Caco-2 (cell line): ENCODE measurements at regions of chr7 and their contacts with region 1.

Region 1: GRCh38 chr7:20219446-20220292 is 2.5 kb upstream of the MACC1 start:
- DNase-seq: peak; percentile 94 to 98
- H3K4me3 ChIP-seq: no peak overlapping the region
- H3K4me3 Mint-ChIP-seq: peak overlapping the region; percentile 78
- H3K27ac Mint-ChIP-seq: peak overlapping the region; percentile 95
- H3K4me1 ChIP-seq: peaks cover 52% of the 10 kb centered on the region
- H3K4me1 Mint-ChIP-seq: peaks cover 48% of the 10 kb centered on the region
- H3K27me3 ChIP-seq: no peaks in the 10 kb centered on the region
- H3K27me3 Mint-ChIP-seq: no peaks in the 10 kb centered on the region
- CTCF ChIP-seq: no peak

Region 2: GRCh38 chr7:18458830-18459229 is 1760.8 kb before region 1 on chr7:
- CTCF ChIA-PET with region 1: no interaction called
- POLR2A ChIA-PET with region 1: no interaction called
- intact Hi-C with region 1: no loop called
- DNase-seq: no peak
- H3K4me3 ChIP-seq: no peak overlapping the region
- H3K4me3 Mint-ChIP-seq: no peak overlapping the region
- H3K27ac Mint-ChIP-seq: no peak overlapping the region
- H3K4me1 ChIP-seq: no peaks in the 10 kb centered on the region
- H3K4me1 Mint-ChIP-seq: no peaks in the 10 kb centered on the region
- H3K27me3 ChIP-seq: no peaks in the 10 kb centered on the region
- H3K27me3 Mint-ChIP-seq: no peaks in the 10 kb centered on the region
- CTCF ChIP-seq: no peak

Region 3: DNA sequence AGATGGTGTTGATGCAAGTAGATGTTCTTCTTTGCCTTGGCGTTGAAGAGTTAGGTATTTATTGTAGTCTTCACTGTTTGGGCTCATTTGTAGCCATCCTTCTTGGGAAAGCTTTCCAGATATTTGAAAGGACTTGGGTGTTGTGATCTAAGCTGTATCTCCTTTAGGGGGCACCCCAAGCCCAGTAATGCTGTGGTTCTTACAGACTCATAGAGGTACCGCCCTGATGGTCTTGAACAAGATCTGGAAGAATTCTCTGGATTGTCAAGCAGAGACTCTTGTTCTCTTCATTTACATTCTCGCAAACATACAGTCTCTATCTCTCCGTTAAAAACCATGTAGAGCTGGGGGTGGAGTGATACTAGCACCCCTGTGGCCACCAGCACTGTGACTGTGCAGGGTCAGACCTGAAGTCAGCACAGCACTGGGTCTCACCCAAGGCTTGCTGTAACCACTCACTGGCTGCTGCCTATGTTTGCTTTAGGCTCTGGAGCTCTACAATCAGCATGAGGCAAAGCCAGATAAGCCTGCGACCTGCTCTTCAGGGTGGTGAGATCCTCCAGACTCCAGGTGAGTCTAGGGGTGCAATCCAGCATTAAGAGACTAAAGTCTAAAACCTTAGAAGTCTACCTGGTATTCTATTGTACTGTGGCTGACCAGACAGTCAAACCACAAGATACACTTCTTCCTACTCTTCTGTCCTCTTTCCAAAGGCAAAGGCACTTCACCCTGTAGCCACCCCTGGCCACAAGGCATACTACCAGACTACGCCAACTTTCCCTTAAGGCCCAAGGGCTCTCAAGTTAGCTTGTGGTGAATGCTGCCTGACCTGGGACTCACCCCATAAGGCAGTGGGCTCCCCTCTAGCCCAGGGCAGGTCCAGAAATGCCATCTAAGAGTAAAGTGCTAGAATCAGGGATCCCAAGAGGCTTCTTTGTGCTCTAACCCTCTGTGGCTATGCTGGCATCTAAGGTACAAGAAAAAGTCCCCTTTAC is 236.5 kb before region 1 on chr7:
- CTCF ChIA-PET with region 1: interaction called, 4 read pairs
- POLR2A ChIA-PET with region 1: no interaction called
- intact Hi-C with region 1: loop called (anchors 1 kb)
- DNase-seq: peak; percentile 81 to 82
- H3K4me3 ChIP-seq: no peak overlapping the region
- H3K4me3 Mint-ChIP-seq: no peak overlapping the region
- H3K27ac Mint-ChIP-seq: peak overlapping the region; percentile 37
- H3K4me1 ChIP-seq: peaks cover 14% of the 10 kb centered on the region
- H3K4me1 Mint-ChIP-seq: peaks cover 10% of the 10 kb centered on the region
- H3K27me3 ChIP-seq: no peaks in the 10 kb centered on the region
- H3K27me3 Mint-ChIP-seq: no peaks in the 10 kb centered on the region
- CTCF ChIP-seq: peak; percentile 46 to 63

Region 4: GRCh38 chr7:20146451-20146850 is 73.2 kb before region 1 on chr7:
- CTCF ChIA-PET with region 1: no interaction called
- POLR2A ChIA-PET with region 1: no interaction called
- intact Hi-C with region 1: no loop called
- DNase-seq: no peak
- H3K4me3 ChIP-seq: no peak overlapping the region
- H3K4me3 Mint-ChIP-seq: no peak overlapping the region
- H3K27ac Mint-ChIP-seq: no peak overlapping the region
- H3K4me1 ChIP-seq: peaks cover 9% of the 10 kb centered on the region; the same call in 1 of the 2 replicates
- H3K4me1 Mint-ChIP-seq: peaks cover 19% of the 10 kb centered on the region
- H3K27me3 ChIP-seq: no peaks in the 10 kb centered on the region
- H3K27me3 Mint-ChIP-seq: no peaks in the 10 kb centered on the region
- CTCF ChIP-seq: no peak

Region 5: DNA sequence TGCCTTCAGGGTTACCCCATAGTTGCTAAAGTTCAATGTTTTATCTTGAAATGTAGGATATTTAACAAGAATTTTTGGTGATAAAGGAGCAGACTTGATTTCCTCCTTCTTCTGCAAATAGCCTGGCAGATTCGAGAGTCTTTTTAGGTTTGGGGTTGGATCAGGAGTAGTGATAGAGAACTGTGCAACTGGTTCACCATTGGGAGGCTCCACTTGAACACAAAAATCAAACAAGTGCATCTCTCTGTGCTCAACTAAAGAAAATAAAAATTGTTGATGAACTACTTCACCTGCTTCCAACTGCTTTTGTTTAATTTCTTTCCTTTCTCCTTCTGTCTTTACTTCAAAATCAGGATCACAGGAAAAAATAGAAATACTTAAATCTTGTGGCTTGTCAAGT is 61.0 kb before region 1 on chr7:
- CTCF ChIA-PET with region 1: no interaction called
- POLR2A ChIA-PET with region 1: no interaction called
- intact Hi-C with region 1: loop called (anchors 2 kb)
- DNase-seq: peak in 1 of 2 experiments; percentile 10
- H3K4me3 ChIP-seq: no peak overlapping the region
- H3K4me3 Mint-ChIP-seq: peak overlapping the region; percentile 25
- H3K27ac Mint-ChIP-seq: peak overlapping the region; percentile 66
- H3K4me1 ChIP-seq: peaks cover 15% of the 10 kb centered on the region; the same call in 1 of the 2 replicates
- H3K4me1 Mint-ChIP-seq: peaks cover 16% of the 10 kb centered on the region
- H3K27me3 ChIP-seq: no peaks in the 10 kb centered on the region
- H3K27me3 Mint-ChIP-seq: no peaks in the 10 kb centered on the region
- CTCF ChIP-seq: no peak

Region 6: GRCh38 chr7:20197837-20198236 is 21.8 kb before region 1 on chr7:
- CTCF ChIA-PET with region 1: no interaction called
- POLR2A ChIA-PET with region 1: no interaction called
- intact Hi-C with region 1: loop called (anchors 1 kb)
- DNase-seq: no peak
- H3K4me3 ChIP-seq: no peak overlapping the region
- H3K4me3 Mint-ChIP-seq: no peak overlapping the region
- H3K27ac Mint-ChIP-seq: peak overlapping the region; percentile 76
- H3K4me1 ChIP-seq: peaks cover 66% of the 10 kb centered on the region
- H3K4me1 Mint-ChIP-seq: peaks cover 56% of the 10 kb centered on the region
- H3K27me3 ChIP-seq: no peaks in the 10 kb centered on the region
- H3K27me3 Mint-ChIP-seq: no peaks in the 10 kb centered on the region
- CTCF ChIP-seq: peak; percentile 30 to 52

Region 7: DNA sequence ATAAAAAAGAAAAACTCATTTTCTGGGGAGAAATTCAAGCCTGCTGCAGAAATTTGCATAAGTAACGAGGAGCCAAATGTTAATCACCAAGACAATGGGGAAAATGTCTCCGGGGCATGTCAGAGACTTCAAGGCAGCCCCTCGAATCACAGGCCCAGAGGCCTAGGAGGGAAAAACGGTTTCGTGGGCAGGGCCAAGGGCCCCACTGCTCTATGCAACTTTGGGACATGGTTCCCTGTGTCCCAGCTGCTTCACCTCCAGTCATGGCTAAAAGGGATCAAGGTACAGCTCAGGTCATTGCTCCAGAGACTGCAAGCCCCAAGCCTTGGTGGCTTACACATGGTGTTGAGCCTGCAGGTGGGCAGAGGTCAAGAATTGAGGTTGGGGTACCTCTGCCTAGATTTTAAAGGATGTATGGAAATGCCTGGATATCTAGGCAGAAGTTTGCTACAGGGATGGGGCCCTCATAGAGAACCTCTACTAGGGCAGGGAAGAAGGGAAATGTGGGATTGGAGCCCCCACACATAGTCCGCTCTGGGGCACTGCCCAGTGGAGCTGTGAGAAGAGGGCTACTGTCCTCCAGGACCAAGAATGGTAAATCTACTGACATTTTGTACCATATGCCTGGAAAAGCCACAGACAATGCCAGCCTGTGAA is 10.9 kb before region 1 on chr7:
- CTCF ChIA-PET with region 1: no interaction called
- POLR2A ChIA-PET with region 1: no interaction called
- intact Hi-C with region 1: no loop called
- DNase-seq: no peak
- H3K4me3 ChIP-seq: no peak overlapping the region
- H3K4me3 Mint-ChIP-seq: no peak overlapping the region
- H3K27ac Mint-ChIP-seq: no peak overlapping the region
- H3K4me1 ChIP-seq: peaks cover 11% of the 10 kb centered on the region
- H3K4me1 Mint-ChIP-seq: peaks cover 34% of the 10 kb centered on the region
- H3K27me3 ChIP-seq: no peaks in the 10 kb centered on the region
- H3K27me3 Mint-ChIP-seq: no peaks in the 10 kb centered on the region
- CTCF ChIP-seq: no peak

Region 8: GRCh38 chr7:20304376-20304775 is 84.7 kb after region 1 on chr7:
- CTCF ChIA-PET with region 1: interaction called, 4 read pairs
- POLR2A ChIA-PET with region 1: interaction called, 25 read pairs
- intact Hi-C with region 1: loop called (anchors 1 kb)
- DNase-seq: peak; percentile 70 to 87
- H3K4me3 ChIP-seq: no peak overlapping the region
- H3K4me3 Mint-ChIP-seq: no peak overlapping the region
- H3K27ac Mint-ChIP-seq: peak overlapping the region; percentile 35
- H3K4me1 ChIP-seq: peaks cover 40% of the 10 kb centered on the region
- H3K4me1 Mint-ChIP-seq: peaks cover 45% of the 10 kb centered on the region
- H3K27me3 ChIP-seq: no peaks in the 10 kb centered on the region
- H3K27me3 Mint-ChIP-seq: no peaks in the 10 kb centered on the region
- CTCF ChIP-seq: peak in 1 of 2 experiments; percentile 10

Region 9: DNA sequence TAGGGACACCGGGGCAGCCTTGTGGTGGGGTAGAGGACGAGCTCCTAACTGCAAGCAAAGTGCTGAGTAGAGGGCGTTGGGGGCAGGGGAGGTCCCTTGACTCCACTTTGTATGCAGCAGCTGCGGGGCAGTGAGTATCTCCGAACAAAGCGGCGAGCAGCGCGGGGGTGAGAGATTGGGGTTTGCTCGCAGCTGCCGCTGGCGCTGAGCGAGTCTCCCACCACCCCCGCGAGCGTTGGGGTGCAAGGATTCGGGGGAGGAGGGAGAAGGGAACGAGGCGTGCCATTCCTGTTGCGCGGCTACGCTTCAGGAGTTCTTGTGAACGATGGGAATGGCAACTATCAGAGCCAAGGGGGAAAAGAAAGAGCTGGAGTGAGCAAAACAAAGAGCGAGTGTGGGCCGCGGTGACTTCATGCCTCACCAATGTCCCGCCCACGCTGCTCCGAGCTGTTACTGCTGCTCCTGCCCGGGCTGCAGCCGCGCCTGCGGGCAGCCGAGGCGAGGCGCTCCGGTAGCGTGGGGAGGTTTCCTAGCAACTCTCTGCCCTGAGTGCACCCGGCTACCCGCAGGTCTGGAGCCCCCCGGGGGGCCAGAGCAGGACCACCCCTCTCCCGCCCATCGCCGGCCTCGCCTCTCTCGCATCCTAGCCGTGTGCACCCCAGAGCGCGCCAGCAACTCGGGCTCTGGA is 110.7 kb after region 1 on chr7 and contains the start of gene ITGB8:
- CTCF ChIA-PET with region 1: interaction called, 5 read pairs
- POLR2A ChIA-PET with region 1: interaction called, 14 read pairs
- intact Hi-C with region 1: loop called (anchors 1 kb)
- DNase-seq: peak; percentile 76 to 77
- H3K4me3 ChIP-seq: peak within 1 kb of the TSS; percentile 91
- H3K4me3 Mint-ChIP-seq: peak within 1 kb of the TSS; percentile 85
- H3K27ac Mint-ChIP-seq: peak within 1 kb of the TSS; percentile 88
- H3K4me1 ChIP-seq: peaks cover 4% of the 10 kb centered on the region; the same call in 1 of the 2 replicates
- H3K4me1 Mint-ChIP-seq: no peaks in the 10 kb centered on the region
- H3K27me3 ChIP-seq: no peaks in the 10 kb centered on the region
- H3K27me3 Mint-ChIP-seq: no peaks in the 10 kb centered on the region
- CTCF ChIP-seq: no peak
- total RNA-seq, gene ITGB8: 3.2 and 4.6 TPM in 2 replicates

Region 10: DNA sequence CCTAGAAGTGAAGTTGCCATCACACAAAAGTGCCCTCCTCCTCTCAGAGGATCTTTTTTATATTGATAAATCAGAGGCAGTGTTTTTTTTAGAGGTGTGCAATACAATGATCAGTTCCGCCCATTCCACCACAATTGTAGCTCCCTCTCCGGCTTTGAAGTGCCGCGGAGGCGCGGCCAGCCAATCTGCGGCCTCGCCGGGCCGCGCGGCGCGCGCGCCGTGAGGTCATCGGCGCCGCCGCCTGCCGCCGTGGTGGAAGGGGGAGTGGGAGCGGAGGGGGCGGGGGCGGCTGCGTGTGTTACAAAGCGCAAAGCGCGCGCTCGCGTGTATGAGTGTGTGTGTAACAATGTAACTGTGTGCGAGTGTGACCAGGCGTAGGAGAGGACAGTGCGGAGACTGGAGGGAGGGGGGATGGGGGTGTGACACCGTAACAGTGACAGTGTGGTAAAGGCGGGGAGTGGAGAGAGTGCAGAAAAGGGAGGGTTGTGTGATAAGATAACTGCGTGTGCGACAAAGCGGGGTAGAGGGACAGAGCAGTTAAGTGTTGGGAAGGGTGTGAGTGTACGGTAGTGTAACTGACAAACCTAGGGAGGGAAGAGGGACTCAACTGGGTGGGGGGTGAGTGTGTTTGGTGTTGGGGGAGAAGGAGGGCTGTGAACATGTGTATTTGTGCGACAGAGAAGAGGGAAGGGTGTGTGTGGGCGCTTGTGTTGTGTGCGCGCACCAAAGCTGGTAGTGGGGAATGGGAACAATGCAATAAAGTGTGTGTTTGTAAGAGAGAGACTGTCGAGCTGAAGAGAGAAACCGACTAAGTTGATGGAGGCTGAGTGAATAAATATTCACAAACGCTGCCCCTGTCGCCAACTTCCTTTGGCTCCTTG is 567.4 kb after region 1 on chr7 and contains the start of gene SP8:
- CTCF ChIA-PET with region 1: no interaction called
- POLR2A ChIA-PET with region 1: interaction called, 10 read pairs
- intact Hi-C with region 1: no loop called
- DNase-seq: peak; percentile 86 to 90
- H3K4me3 ChIP-seq: peak within 1 kb of the TSS; percentile 84
- H3K4me3 Mint-ChIP-seq: peak within 1 kb of the TSS; percentile 92
- H3K27ac Mint-ChIP-seq: peak within 1 kb of the TSS; percentile 66
- H3K4me1 ChIP-seq: peaks cover 10% of the 10 kb centered on the region
- H3K4me1 Mint-ChIP-seq: peaks cover 29% of the 10 kb centered on the region
- H3K27me3 ChIP-seq: no peaks in the 10 kb centered on the region; the same call in 1 of the 2 replicates
- H3K27me3 Mint-ChIP-seq: peaks cover 6% of the 10 kb centered on the region
- CTCF ChIP-seq: no peak
- total RNA-seq, gene SP8: 13.2 and 13.3 TPM in 2 replicates